ENCODE measurements at regions of chr3 and their contacts with region 1.

Region 1: GRCh38 chr3:16040991-16041390 is 133.5 kb upstream of the GALNT15 start:
- DNase-seq: no peak
- H3K4me3 ChIP-seq: no peak overlapping the region
- H3K27ac ChIP-seq: no peak overlapping the region
- H3K4me1 ChIP-seq: no peaks in the 10 kb centered on the region
- H3K27me3 ChIP-seq: no peaks in the 10 kb centered on the region

Region 2: GRCh38 chr3:16240283-16241023 is 199.5 kb after region 1 on chr3:
- in situ Hi-C with region 1: loop called (anchors 5 kb)
- DNase-seq: peak; percentile 86
- H3K4me3 ChIP-seq: no peak overlapping the region
- H3K27ac ChIP-seq: peak overlapping the region; percentile 60
- H3K4me1 ChIP-seq: peaks cover 34% of the 10 kb centered on the region
- H3K27me3 ChIP-seq: no peaks in the 10 kb centered on the region

Measured in GM23248 (cell line).